Colonic mucosa (tissue), 4 donors: ENCODE measurements at regions of chr6 and their contacts with region 1.

Region 1: DNA sequence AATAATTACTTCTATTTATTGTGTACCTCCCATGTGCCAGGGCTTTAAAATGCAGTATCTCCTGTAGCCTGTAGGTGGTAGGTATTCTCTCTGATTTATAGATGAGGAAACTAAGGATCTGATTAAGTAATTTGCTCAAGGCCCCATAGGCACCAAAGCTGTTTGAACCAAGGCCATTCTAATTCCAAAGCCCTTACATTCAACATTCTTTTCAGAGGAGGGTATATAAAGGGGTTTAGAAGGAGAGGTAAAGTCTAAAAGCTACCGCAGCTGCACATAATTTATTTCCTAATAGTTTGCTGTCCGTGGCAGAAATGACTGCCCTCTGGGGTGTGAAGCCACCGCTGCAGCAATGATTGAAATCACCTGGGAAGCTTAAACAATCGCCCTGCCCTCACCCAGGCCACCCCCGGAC is 95.0 kb upstream of the FAM8A1 start:
- DNase-seq: no peak
- H3K4me3 ChIP-seq: no peak overlapping the region
- H3K27ac ChIP-seq: no peak overlapping the region
- H3K4me1 ChIP-seq: no peaks in the 10 kb centered on the region
- H3K27me3 ChIP-seq: no peaks in the 10 kb centered on the region
- CTCF ChIP-seq: no peak

Region 2: DNA sequence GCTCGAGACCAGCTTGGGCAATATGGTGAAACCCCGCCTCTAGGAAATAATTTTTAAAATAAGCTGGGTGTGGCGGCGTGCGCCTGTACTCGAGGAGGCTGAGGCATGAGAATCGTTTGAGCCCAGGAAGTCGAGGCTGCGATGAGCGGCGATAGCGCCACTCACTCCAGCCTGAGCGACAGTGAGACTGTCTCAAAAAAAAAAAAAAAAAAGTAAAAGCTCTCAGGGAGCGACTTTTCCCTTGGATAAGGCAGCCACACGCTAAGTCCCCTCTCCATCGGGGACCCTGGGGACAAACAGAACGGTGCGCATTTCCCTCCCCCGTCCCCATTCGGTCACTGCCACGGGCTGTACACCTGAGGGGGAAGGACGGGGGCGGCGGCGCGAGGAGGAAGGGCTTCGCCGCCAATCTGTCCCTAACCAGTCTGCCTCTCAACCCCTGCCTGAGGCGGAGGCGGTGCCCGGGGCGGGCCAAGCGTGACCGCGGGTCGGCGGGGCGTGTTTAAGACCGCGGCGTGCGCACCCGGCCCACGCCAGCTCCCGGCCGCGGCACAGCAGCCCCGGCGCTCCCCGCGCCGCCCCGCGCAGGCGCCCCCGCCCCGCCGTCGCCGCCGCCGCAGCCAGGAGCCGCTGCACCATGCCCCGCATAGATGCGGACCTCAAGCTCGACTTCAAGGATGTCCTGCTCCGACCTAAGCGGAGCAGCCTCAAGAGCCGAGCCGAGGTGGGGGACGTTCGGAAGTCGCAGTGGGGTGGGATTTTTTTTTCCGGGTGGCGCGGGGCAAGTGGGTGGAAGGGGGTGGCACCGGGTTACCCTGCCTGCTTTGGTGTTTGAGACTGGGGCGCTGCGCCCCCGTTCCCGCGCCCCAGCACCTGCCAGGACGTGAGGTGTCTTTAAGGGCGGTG is 1266.8 kb before region 1 on chr6 and contains the start of gene GMPR:
- intact Hi-C with region 1: no loop called
- DNase-seq: peak; percentile 86
- H3K4me3 ChIP-seq: peak within 1 kb of the TSS; percentile 43
- H3K27ac ChIP-seq: peak within 1 kb of the TSS; percentile 28
- H3K4me1 ChIP-seq: no peaks in the 10 kb centered on the region
- H3K27me3 ChIP-seq: no peaks in the 10 kb centered on the region
- CTCF ChIP-seq: no peak
- total RNA-seq, gene GMPR: 3.4 to 4.7 TPM

Region 3: GRCh38 chr6:17574866-17575560 is 69.9 kb after region 1 on chr6:
- intact Hi-C with region 1: loop called (anchors 10 kb)
- DNase-seq: no peak
- H3K4me3 ChIP-seq: no peak overlapping the region
- H3K27ac ChIP-seq: no peak overlapping the region
- H3K4me1 ChIP-seq: no peaks in the 10 kb centered on the region
- H3K27me3 ChIP-seq: no peaks in the 10 kb centered on the region
- CTCF ChIP-seq: no peak